Left cardiac atrium (tissue), 4 donors: ENCODE measurements at regions of chrX and their contacts with region 1.

Region 1: GRCh38 chrX:130916636-130917422 is 13.8 kb upstream of the ENOX2 start:
- DNase-seq: peak; percentile 36
- ATAC-seq: peak in 1 of 2 donors; percentile 23

Region 2: GRCh38 chrX:129606918-129607317 is 1309.9 kb before region 1 on chrX:
- intact Hi-C with region 1: loop called in 1 of 2 experiments (anchors 5 kb)
- DNase-seq: peak; percentile 42
- ATAC-seq: peak; percentile 58

Region 3: DNA sequence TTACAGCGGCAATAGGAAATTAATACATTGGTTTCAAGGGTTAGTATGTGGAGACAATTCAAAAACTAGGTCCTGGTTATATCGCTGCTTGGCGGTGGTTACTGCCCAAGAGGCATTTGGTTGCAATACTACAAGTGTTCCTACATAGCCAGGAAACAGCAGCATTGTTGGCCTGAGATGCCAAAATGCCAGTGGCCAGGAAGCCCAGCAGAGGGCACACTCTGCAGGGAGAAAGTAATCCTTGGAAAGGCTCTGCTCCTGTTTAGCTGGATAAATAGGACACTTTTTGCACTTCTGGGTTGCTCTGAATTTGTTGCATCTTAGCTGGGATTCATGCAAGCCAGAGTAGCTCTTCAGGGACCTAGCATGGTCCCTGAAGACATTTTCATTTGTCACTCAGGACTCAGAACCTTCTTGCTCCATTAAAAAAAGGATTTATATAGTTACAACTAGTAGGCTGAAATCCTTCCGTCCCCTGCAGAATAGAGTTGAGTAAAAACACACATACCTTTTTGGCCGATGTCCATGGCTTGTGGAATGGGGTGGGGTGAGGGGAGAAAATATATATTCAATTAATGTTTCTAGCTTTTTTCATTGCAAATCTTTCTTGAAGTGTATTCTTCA is 523.3 kb before region 1 on chrX:
- intact Hi-C with region 1: loop called in 1 of 2 experiments (anchors 5 kb)
- DNase-seq: peak; percentile 25
- ATAC-seq: peak; percentile 12 to 26

Region 4: GRCh38 chrX:130531066-130531465 is 385.8 kb before region 1 on chrX:
- intact Hi-C with region 1: loop called (anchors 5 kb)
- DNase-seq: no peak
- ATAC-seq: no peak

Region 5: GRCh38 chrX:130539721-130540321 is 377.0 kb before region 1 on chrX:
- intact Hi-C with region 1: loop called in 1 of 2 experiments (anchors 5 kb)
- DNase-seq: peak; percentile 37
- ATAC-seq: no peak

Region 6: DNA sequence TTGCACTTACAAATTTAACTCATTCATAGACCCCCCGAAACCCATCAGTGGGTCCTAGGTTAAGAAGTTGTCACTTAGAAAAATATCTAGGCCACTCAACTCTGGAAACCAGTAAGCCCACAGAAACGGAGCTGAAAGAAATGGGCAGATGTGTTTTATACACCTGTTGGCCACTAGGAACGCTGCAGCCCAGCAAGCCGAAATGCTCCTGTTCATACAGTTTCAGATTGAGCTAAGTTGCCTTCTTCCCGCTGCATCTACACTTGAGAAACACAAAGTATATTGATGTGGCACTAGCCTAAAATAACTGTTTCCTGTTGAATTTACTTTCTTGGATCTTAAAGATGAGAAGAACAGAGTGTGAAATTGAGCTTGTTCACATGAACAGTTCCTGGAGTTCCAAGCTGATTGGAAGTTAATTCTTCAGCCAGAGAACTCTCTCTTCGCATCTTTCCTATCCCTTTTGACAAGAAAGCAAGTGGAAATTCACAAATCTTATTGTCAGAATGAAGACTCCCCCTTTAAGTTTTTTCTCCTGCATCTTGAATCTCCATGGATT is 340.9 kb before region 1 on chrX:
- intact Hi-C with region 1: loop called (anchors 2 to 10 kb)
- DNase-seq: peak; percentile 32
- ATAC-seq: peak in 1 of 2 donors; percentile 34

Region 7: DNA sequence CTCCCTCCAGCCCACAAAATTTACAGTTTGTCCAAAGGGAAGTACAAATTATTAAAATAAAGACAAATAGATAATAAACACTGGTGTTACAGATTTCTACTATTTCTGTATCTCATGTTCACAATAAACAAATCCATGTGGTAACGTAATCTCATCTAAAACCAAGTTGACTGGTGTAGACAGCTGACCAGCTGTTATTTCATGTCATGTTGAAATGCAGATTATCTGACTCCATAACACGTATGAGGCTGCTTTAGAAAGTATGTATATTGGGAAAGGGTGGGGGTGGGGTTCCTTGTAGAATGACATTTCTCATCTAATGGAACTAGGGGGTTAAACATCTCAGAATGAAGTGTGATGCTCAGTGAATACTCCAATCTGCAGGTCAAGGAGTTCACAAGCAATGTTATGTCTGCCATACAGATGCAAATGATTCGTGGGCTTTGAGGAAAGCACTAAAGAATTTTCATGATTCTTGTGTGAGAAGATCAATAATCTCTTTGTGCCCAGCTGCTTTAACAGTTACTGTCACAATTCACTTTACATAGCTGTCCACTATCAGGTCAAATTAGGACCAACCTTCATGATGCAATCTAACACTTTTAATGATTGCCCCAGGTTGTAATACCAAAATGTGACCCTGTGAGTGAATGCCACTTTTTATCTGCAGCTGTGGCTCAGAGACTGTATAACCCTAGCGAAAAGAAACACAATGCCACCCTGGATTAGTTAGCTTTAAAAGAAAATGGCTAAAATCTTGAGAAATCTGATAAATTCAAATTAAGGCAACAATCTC is 127.8 kb before region 1 on chrX:
- intact Hi-C with region 1: no loop called
- DNase-seq: no peak
- ATAC-seq: no peak